A673 (cell line): ENCODE measurements at regions of chr4 and their contacts with region 1.

Region 1: GRCh38 chr4:145920205-145920604 is 18.4 kb downstream of the ZNF827 start:
- DNase-seq: peak; percentile 17
- H3K4me3 ChIP-seq: no peak overlapping the region
- H3K27ac ChIP-seq: no peak overlapping the region
- H3K4me1 ChIP-seq: peaks cover 13% of the 10 kb centered on the region
- H3K27me3 ChIP-seq: no peaks in the 10 kb centered on the region
- CTCF ChIP-seq: no peak

Region 2: DNA sequence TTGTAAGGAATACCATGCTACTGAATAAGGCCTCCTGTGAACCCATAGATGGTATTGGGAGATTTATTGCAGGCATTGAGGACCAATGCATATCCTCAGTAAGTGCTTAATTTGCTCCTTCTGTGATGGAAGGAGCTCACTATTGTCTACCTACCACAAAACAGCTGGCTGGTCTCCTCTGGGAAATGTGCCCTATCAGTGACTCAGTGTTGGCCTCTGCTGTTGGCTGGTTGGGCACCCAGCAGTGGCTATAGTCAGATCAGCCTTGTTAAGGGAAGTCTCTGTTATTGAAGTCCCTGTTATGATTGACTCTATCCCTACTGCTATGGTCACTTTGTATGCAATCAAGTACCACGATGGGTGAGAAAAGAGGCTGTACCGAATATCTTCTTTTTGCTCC is 712.3 kb before region 1 on chr4:
- CTCF ChIA-PET with region 1: no interaction called
- POLR2A ChIA-PET with region 1: no interaction called
- intact Hi-C with region 1: no loop called
- DNase-seq: no peak
- H3K4me3 ChIP-seq: no peak overlapping the region
- H3K27ac ChIP-seq: no peak overlapping the region
- H3K4me1 ChIP-seq: no peaks in the 10 kb centered on the region
- H3K27me3 ChIP-seq: no peaks in the 10 kb centered on the region
- CTCF ChIP-seq: no peak

Region 3: DNA sequence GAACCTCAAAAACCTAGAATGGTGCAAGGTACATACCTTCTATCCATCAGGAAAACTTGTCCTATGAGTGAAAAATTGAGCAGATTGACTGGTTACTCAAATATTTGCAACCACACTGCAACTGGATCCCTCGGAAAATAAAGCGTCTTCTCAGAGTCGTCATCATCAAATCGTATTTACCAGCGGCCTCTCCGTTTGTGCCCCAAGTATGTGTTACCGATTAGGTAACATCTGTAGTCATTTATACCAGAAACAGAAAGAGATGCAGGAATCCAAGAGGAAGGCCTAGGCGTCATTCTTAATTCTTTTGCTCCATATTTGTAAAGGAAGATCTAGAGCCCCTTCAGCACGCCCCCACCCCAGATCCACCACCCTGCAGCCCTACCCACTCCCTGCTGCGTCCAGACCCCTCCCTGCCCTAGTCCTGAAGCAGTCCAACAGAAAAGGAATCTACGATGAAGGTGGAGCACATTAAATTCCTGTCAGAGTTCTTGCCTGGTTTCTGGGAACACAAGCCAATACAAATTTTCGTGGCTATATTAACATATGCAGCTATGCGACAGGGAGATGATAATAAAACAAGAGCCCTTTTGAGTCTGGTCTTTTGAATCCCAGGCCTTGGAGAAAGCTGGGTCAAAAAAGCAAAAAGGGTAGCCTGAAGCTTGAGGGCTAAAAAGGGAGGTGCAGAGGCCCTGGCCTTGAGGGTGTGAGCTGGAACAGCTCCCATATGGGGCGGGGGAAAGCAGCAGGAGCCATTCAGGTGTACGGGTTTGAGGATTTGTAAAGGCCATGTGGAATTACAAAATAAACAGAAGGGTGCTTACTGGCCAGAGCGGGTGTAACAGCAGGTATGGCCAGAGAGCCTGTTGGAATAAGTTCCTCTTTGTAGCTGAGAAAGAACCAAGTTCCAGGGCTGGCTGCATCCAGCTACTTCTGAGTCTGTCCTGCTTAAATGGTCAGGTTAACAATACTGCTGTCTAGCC is 58.6 kb before region 1 on chr4:
- CTCF ChIA-PET with region 1: no interaction called
- POLR2A ChIA-PET with region 1: no interaction called
- intact Hi-C with region 1: no loop called
- DNase-seq: no peak
- H3K4me3 ChIP-seq: no peak overlapping the region
- H3K27ac ChIP-seq: no peak overlapping the region
- H3K4me1 ChIP-seq: peaks cover 39% of the 10 kb centered on the region
- H3K27me3 ChIP-seq: no peaks in the 10 kb centered on the region
- CTCF ChIP-seq: no peak

Region 4: DNA sequence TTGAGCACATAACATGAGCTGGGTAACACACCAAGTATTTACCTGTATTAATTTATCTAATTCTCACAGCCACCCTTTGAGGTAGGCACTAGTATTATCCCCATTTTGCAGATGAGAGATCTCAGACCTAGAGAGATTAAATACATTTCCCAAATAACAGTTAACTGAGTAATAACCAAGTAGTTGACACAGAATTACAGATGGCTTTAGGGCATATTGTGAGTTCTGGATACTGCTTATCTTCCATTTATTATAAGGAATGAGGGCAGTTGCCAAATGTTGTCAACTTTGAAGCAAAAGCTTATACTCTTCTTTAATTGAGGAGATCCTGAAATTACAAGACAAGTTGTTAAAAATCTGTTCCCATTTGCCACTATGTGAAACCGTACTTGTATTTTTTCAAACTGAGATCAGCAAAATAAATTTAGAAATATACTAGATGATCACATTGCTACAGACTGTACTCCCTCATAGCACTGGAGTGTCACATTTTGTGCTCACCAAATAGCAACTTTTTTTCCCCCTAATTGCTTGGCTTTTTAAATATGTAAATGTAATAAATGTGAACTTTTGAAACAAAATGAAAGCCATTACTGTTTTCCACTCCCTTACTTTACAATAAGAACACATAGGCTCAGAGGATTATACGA is 43.5 kb before region 1 on chr4:
- CTCF ChIA-PET with region 1: no interaction called
- POLR2A ChIA-PET with region 1: interaction called, 23 read pairs
- intact Hi-C with region 1: no loop called
- DNase-seq: no peak
- H3K4me3 ChIP-seq: no peak overlapping the region
- H3K27ac ChIP-seq: no peak overlapping the region
- H3K4me1 ChIP-seq: peaks cover 3% of the 10 kb centered on the region
- H3K27me3 ChIP-seq: no peaks in the 10 kb centered on the region
- CTCF ChIP-seq: no peak

Region 5: GRCh38 chr4:145887241-145887991 is 32.8 kb before region 1 on chr4:
- CTCF ChIA-PET with region 1: no interaction called
- POLR2A ChIA-PET with region 1: no interaction called
- intact Hi-C with region 1: no loop called
- DNase-seq: peak; percentile 44
- H3K4me3 ChIP-seq: no peak overlapping the region
- H3K27ac ChIP-seq: no peak overlapping the region
- H3K4me1 ChIP-seq: peaks cover 31% of the 10 kb centered on the region
- H3K27me3 ChIP-seq: no peaks in the 10 kb centered on the region
- CTCF ChIP-seq: no peak; the same call in 1 of the 2 replicates

Region 6: GRCh38 chr4:145930592-145930991 is 10.4 kb after region 1 on chr4:
- CTCF ChIA-PET with region 1: no interaction called
- POLR2A ChIA-PET with region 1: interaction called, 14 read pairs
- intact Hi-C with region 1: no loop called
- DNase-seq: no peak
- H3K4me3 ChIP-seq: no peak overlapping the region
- H3K27ac ChIP-seq: no peak overlapping the region
- H3K4me1 ChIP-seq: peaks cover 15% of the 10 kb centered on the region
- H3K27me3 ChIP-seq: no peaks in the 10 kb centered on the region
- CTCF ChIP-seq: no peak

Region 7: GRCh38 chr4:146510942-146511341 is 590.7 kb after region 1 on chr4:
- CTCF ChIA-PET with region 1: no interaction called
- POLR2A ChIA-PET with region 1: interaction called, 17 read pairs
- intact Hi-C with region 1: no loop called
- DNase-seq: peak; percentile 69
- H3K4me3 ChIP-seq: no peak overlapping the region
- H3K27ac ChIP-seq: peak overlapping the region; percentile 78
- H3K4me1 ChIP-seq: peaks cover 58% of the 10 kb centered on the region
- H3K27me3 ChIP-seq: no peaks in the 10 kb centered on the region
- CTCF ChIP-seq: peak; percentile 65